ENCODE measurements at regions of chr14 and their contacts with region 1.

Region 1: GRCh38 chr14:61420326-61420725 is 98.9 kb downstream of the PRKCH start:
- DNase-seq: peak in 5 of 14 experiments; percentile 38 to 67 (median 44)
- ATAC-seq: peak; percentile 42
- H3K4me3 ChIP-seq: no peak overlapping the region
- H3K4me3 Mint-ChIP-seq: peak overlapping the region; percentile 63
- H3K27ac ChIP-seq: peak overlapping the region in 1 of 2 donors; percentile 33
- H3K27ac Mint-ChIP-seq: no peak overlapping the region
- H3K4me1 ChIP-seq: peaks cover 76% of the 10 kb centered on the region
- H3K4me1 Mint-ChIP-seq: peaks cover 4% of the 10 kb centered on the region
- H3K27me3 ChIP-seq: no peaks in the 10 kb centered on the region
- H3K27me3 Mint-ChIP-seq: no peaks in the 10 kb centered on the region
- CTCF ChIP-seq: no peak

Region 2: GRCh38 chr14:61218767-61219166 is 201.6 kb before region 1 on chr14:
- CTCF ChIA-PET with region 1: no interaction called
- POLR2A ChIA-PET with region 1: no interaction called
- intact Hi-C with region 1: no loop called
- DNase-seq: no peak
- ATAC-seq: no peak
- H3K4me3 ChIP-seq: no peak overlapping the region
- H3K4me3 Mint-ChIP-seq: no peak overlapping the region
- H3K27ac ChIP-seq: no peak overlapping the region
- H3K27ac Mint-ChIP-seq: no peak overlapping the region
- H3K4me1 ChIP-seq: no peaks in the 10 kb centered on the region
- H3K4me1 Mint-ChIP-seq: no peaks in the 10 kb centered on the region
- H3K27me3 ChIP-seq: peaks cover 13 to 29% of the 10 kb centered on the region in 2 experiments
- H3K27me3 Mint-ChIP-seq: peaks cover 61% of the 10 kb centered on the region
- CTCF ChIP-seq: no peak

Region 3: DNA sequence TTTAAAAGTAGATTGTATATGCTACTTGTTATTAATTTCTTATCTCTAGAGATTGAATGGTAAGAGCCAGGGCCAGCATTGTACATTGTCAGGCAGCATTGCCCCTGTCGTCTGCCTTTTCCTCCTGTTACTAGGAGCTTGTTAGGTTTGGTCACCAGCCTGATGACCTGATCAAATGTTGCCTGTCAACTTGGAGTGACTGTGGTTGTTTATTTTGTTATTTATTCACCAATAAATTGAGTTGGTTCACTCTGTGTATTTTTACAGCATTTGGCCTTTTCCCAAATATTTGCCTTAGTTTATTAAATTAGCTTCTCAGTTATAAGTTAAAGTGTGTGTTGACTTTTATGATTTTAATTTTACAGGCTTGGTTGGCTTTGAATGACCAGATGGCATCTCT is 10.6 kb before region 1 on chr14:
- CTCF ChIA-PET with region 1: interaction called, 3 read pairs
- POLR2A ChIA-PET with region 1: interaction called, 4 read pairs
- intact Hi-C with region 1: loop called in 1 of 2 experiments (anchors 2 kb)
- DNase-seq: no peak
- ATAC-seq: no peak
- H3K4me3 ChIP-seq: no peak overlapping the region
- H3K4me3 Mint-ChIP-seq: no peak overlapping the region
- H3K27ac ChIP-seq: no peak overlapping the region
- H3K27ac Mint-ChIP-seq: no peak overlapping the region
- H3K4me1 ChIP-seq: peaks cover 95% of the 10 kb centered on the region
- H3K4me1 Mint-ChIP-seq: peaks cover 47% of the 10 kb centered on the region
- H3K27me3 ChIP-seq: no peaks in the 10 kb centered on the region
- H3K27me3 Mint-ChIP-seq: no peaks in the 10 kb centered on the region
- CTCF ChIP-seq: no peak

Region 4: DNA sequence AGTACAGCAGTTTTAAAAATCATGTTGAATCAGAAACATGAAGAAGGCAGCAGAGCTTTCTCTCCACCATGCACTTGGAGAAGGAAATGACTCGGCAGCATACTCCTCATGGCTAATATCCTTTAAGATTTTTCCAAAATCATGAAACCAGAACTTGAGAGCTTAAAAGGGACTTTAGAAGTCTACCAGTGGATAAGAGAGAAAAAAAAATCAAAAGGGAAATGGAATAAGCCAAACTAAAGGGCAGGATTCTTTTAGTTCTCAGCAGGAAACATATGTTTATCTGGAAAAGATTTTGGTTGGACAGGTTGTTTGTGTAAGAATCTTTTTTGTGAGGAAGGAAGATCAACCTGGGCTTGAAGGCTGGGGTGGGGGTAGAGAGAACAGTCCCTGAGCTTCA is 12.8 kb after region 1 on chr14:
- CTCF ChIA-PET with region 1: interaction called, 3 read pairs
- POLR2A ChIA-PET with region 1: interaction called, 5 read pairs
- intact Hi-C with region 1: loop called in 1 of 2 experiments (anchors 1 kb)
- DNase-seq: no peak
- ATAC-seq: no peak
- H3K4me3 ChIP-seq: no peak overlapping the region
- H3K4me3 Mint-ChIP-seq: peak overlapping the region; percentile 60
- H3K27ac ChIP-seq: peak overlapping the region in 1 of 2 donors; percentile 31
- H3K27ac Mint-ChIP-seq: peak overlapping the region; percentile 73
- H3K4me1 ChIP-seq: peaks cover 57% of the 10 kb centered on the region
- H3K4me1 Mint-ChIP-seq: peaks cover 94% of the 10 kb centered on the region
- H3K27me3 ChIP-seq: no peaks in the 10 kb centered on the region
- H3K27me3 Mint-ChIP-seq: no peaks in the 10 kb centered on the region
- CTCF ChIP-seq: no peak

Region 5: GRCh38 chr14:61489932-61490331 is 69.6 kb after region 1 on chr14:
- CTCF ChIA-PET with region 1: no interaction called
- POLR2A ChIA-PET with region 1: no interaction called
- intact Hi-C with region 1: no loop called
- DNase-seq: peak in 2 of 14 experiments; percentile 52 to 65
- ATAC-seq: no peak
- H3K4me3 ChIP-seq: no peak overlapping the region
- H3K4me3 Mint-ChIP-seq: no peak overlapping the region
- H3K27ac ChIP-seq: no peak overlapping the region
- H3K27ac Mint-ChIP-seq: no peak overlapping the region
- H3K4me1 ChIP-seq: peaks cover 54% of the 10 kb centered on the region
- H3K4me1 Mint-ChIP-seq: peaks cover 45% of the 10 kb centered on the region
- H3K27me3 ChIP-seq: no peaks in the 10 kb centered on the region
- H3K27me3 Mint-ChIP-seq: no peaks in the 10 kb centered on the region
- CTCF ChIP-seq: no peak

Measured in CD4-positive, alpha-beta T cell (primary cell).